PC-9 (cell line): ENCODE measurements at regions of chr1 and their contacts with region 1.

Region 1: DNA sequence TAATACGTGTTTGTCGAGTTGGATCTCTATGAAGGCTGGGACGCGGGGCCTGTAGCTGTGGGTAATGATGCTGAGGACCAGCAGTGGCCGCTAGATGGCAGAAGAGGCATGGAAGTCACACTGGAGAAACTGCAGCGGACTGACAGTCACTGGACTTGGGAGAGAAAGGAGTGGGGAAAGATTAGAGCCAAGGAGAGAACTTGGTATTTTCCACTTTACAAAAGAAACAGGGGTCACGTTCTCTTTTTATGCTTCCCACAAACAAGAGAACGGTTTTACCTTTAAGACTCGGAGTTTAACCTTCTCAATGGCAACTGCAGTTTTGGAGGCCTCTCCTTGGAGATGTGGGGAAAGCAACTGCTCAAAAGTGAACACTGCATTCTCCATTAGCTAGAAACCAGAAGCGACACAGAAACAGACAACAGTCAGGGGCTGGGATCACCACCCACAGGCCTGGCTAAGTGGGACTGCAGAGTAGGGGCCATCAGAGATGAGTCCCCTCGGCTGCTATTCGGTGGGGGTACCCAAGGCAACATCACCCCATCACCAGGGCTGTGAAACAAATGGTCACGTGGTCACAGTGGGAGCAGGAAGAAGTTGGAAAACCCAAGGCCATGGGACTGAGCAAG is 51.1 kb upstream of the EDEM3 start:
- DNase-seq: peak; percentile 63 to 81
- H3K4me3 ChIP-seq: no peak overlapping the region
- H3K27ac ChIP-seq: no peak overlapping the region
- H3K4me1 ChIP-seq: peaks cover 17% of the 10 kb centered on the region
- H3K27me3 ChIP-seq: no peaks in the 10 kb centered on the region
- CTCF ChIP-seq: peak; percentile 90

Region 2: GRCh38 chr1:184982002-184982954 is 176.5 kb after region 1 on chr1:
- CTCF ChIA-PET with region 1: interaction called, 7 read pairs
- POLR2A ChIA-PET with region 1: no interaction called
- intact Hi-C with region 1: loop called (anchors 1 kb)
- DNase-seq: peak in 1 of 2 experiments; percentile 63
- H3K4me3 ChIP-seq: no peak overlapping the region
- H3K27ac ChIP-seq: no peak overlapping the region
- H3K4me1 ChIP-seq: no peaks in the 10 kb centered on the region
- H3K27me3 ChIP-seq: no peaks in the 10 kb centered on the region
- CTCF ChIP-seq: peak; percentile 92

Region 3: DNA sequence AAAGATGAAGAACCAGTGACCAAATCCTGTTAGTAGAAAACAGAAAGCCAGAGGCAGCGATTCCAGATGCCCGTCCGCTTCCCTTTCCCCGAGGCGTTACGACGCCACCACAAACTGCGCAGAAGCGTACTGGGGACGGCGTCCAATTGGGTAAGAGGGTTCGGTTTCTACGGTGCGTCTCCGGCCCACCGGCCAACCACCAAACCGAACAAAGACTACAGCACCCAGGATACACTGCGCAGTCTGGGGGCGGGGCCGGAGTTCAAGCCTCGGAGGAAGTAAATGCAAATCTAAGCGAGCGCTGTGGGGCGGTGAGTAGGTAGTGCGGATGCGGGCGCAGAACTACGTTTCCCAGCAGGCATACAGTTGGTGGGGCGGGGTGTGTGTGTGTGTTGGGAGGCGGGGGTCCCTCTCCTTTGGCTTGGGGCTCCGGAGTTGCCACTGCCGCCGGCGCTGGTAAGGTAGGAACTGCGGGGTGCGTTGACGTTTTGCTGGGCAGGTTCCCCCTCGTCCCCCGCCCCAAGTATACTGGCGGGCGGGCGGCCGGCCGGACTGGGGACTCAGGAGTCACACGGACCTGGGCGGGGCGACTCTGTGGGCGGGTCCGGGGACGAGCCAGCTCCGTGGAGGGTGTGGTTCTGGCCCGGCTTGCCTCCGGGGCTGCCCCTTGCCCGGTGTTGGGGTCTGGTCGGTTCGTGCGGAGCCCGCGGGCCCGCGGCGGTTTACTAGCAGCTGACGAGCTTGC is 351.2 kb after region 1 on chr1 and contains the starts of genes SWT1 and TRMT1L:
- CTCF ChIA-PET with region 1: no interaction called
- POLR2A ChIA-PET with region 1: no interaction called
- intact Hi-C with region 1: loop called (anchors 5 kb)
- DNase-seq: peak; percentile 95 to 98
- H3K4me3 ChIP-seq: peak within 1 kb of the TSS; percentile 82
- H3K27ac ChIP-seq: peak within 1 kb of the TSS; percentile 55
- H3K4me1 ChIP-seq: peaks cover 21% of the 10 kb centered on the region
- H3K27me3 ChIP-seq: no peaks in the 10 kb centered on the region
- CTCF ChIP-seq: no peak
- total RNA-seq, gene SWT1: 2.9 and 3.6 TPM in 2 replicates
- total RNA-seq, gene TRMT1L: 16.9 and 18.3 TPM in 2 replicates

Region 4: DNA sequence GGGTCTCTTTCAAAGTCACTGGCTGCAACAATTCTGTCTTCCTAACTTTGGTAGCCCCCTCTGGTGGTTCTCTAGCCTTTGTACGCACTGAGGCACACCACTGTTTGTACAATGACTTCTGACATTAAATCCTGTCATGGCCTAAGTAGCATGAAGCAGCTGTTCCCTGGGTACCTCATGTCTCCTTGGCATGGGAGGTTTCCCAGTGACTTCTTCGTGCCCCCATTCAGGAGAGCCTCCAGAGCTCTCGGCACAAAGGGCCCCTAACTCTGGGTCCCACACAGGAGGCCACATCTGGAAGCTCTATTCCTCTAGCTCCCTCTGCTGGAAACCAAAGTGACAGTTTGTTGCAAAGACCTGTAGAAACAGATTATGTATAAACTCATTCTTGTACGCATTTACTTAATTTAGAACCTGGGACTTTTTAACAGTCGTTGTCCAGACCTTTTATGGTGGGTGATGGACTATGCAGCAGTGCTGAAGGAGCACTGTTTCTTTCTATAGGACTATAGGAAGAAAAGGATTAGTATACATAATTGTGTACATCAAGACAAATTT is 364.6 kb after region 1 on chr1:
- CTCF ChIA-PET with region 1: interaction called, 5 read pairs
- POLR2A ChIA-PET with region 1: no interaction called
- intact Hi-C with region 1: loop called (anchors 1 kb)
- DNase-seq: peak in 1 of 2 experiments; percentile 30
- H3K4me3 ChIP-seq: no peak overlapping the region
- H3K27ac ChIP-seq: no peak overlapping the region
- H3K4me1 ChIP-seq: no peaks in the 10 kb centered on the region
- H3K27me3 ChIP-seq: no peaks in the 10 kb centered on the region
- CTCF ChIP-seq: peak; percentile 79

Region 5: GRCh38 chr1:185681034-185681633 is 875.4 kb after region 1 on chr1:
- CTCF ChIA-PET with region 1: no interaction called
- POLR2A ChIA-PET with region 1: interaction called, 3 read pairs
- intact Hi-C with region 1: loop called (anchors 1 kb)
- DNase-seq: peak in 1 of 2 experiments; percentile 16
- H3K4me3 ChIP-seq: no peak overlapping the region
- H3K27ac ChIP-seq: no peak overlapping the region
- H3K4me1 ChIP-seq: no peaks in the 10 kb centered on the region
- H3K27me3 ChIP-seq: no peaks in the 10 kb centered on the region
- CTCF ChIP-seq: peak; percentile 70

Region 6: DNA sequence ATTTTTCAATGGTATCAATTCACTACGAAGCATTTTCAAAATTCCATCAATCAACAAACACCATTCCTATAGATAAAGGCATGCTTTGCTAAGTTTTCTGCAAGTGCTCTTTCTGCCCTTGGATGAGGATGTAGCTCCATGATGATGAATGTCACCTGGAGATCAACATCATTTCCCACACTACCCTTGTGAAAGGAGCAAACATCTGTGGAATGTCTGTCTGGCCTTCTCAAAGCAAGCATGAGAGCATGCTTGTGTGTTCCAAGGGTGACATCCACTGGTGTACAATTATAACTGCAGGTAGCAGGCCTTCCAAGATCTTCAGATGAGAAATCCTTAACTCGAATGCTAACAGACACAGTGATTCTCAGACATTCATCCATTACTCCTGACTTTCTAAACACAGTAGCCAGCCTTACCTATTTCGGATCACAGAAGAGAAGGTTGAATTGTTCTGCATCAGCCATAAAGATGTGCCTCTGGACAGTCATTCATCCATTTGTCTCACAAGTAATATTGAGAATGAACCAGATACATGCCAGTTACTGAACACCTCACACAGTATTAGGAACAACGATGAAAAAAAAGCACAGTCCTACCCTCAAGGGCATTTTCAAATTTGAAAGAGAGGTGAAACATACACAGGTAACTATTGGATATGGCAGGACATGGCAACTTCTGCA is 1406.9 kb after region 1 on chr1:
- CTCF ChIA-PET with region 1: no interaction called
- POLR2A ChIA-PET with region 1: no interaction called
- intact Hi-C with region 1: loop called (anchors 1 kb)
- DNase-seq: peak; percentile 55 to 82
- H3K4me3 ChIP-seq: no peak overlapping the region
- H3K27ac ChIP-seq: no peak overlapping the region
- H3K4me1 ChIP-seq: no peaks in the 10 kb centered on the region
- H3K27me3 ChIP-seq: no peaks in the 10 kb centered on the region
- CTCF ChIP-seq: peak; percentile 93